ENCODE measurements at regions of chr10 and their contacts with region 1.

Region 1: DNA sequence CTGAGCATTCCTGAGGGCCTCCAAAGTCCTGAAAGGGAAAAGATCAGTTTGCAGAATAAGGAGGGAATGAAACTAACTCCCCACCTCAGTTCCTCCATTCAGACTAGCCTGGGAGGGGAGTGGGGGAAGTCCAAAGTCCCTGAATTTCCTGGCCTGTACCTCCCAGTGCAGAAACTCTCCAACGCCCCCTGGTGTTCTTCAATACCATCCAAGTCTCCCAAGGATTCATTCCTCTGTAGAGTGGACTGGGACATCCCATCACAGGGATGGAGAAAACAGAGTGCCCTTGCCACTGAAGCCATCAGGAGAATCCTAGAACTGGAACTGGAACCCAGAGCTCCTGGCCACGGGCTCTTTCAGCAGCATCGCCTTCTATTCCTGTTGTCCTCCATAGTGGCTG is 1.6 kb upstream of the COL13A1 start:
- DNase-seq: peak in 2 of 5 donors; percentile 25 to 29
- H3K4me3 ChIP-seq: no peak overlapping the region
- H3K27ac ChIP-seq: no peak overlapping the region
- H3K4me1 ChIP-seq: peaks cover 1% of the 10 kb centered on the region
- H3K27me3 ChIP-seq: no peaks in the 10 kb centered on the region
- CTCF ChIP-seq: peak in 1 of 3 donors; percentile 37
- EP300 ChIP-seq: no peak
- POLR2A ChIP-seq: no peak

Region 2: DNA sequence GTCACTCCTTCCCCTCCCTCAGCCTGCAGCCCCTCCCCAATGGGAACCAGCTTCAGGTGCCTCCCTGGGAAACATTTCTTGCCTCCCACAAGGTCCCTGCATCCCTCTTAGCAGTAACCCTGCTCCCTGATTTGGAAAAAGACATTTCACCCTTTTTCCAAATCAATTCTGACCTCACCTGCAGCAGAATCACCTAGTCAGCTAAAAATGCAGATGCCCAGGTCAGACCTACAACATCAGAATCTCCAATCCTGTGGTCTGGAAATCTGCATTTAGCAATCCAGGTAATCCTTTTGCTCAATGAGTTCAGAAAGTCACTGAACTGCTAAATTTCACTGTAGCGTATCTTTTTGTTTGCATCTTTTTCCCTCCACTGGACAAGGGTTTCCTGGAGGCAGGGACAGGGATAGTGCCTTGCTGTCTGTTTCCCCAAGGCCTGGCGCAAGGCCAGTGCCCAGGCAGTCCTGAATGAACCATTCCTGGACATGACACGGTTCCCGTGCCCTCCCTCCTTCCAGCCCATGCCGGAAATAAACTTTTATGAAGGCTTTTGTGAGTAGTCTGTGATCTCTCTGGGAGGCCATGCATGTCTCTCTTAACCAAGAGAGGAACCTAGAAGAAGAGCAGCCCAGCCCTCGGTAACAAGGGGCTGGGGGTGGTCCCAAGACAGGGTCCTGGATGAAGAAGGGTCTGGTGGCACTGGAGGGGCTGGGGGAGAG is 45.6 kb after region 1 on chr10:
- intact Hi-C with region 1: no loop called
- DNase-seq: no peak
- H3K4me3 ChIP-seq: no peak overlapping the region
- H3K27ac ChIP-seq: no peak overlapping the region
- H3K4me1 ChIP-seq: no peaks in the 10 kb centered on the region
- H3K27me3 ChIP-seq: no peaks in the 10 kb centered on the region
- CTCF ChIP-seq: no peak
- EP300 ChIP-seq: no peak
- POLR2A ChIP-seq: no peak

Region 3: GRCh38 chr10:69929575-69929974 is 129.5 kb after region 1 on chr10:
- intact Hi-C with region 1: loop called in 1 of 4 experiments (anchors 10 kb)
- DNase-seq: no peak
- H3K4me3 ChIP-seq: no peak overlapping the region
- H3K27ac ChIP-seq: no peak overlapping the region
- H3K4me1 ChIP-seq: no peaks in the 10 kb centered on the region
- H3K27me3 ChIP-seq: no peaks in the 10 kb centered on the region
- CTCF ChIP-seq: no peak
- EP300 ChIP-seq: no peak
- POLR2A ChIP-seq: no peak

Measured in ovary (tissue), 10 donors.